Posterior vena cava (tissue), 2 donors: ENCODE measurements at regions of chr3 and their contacts with region 1.

Region 1: DNA sequence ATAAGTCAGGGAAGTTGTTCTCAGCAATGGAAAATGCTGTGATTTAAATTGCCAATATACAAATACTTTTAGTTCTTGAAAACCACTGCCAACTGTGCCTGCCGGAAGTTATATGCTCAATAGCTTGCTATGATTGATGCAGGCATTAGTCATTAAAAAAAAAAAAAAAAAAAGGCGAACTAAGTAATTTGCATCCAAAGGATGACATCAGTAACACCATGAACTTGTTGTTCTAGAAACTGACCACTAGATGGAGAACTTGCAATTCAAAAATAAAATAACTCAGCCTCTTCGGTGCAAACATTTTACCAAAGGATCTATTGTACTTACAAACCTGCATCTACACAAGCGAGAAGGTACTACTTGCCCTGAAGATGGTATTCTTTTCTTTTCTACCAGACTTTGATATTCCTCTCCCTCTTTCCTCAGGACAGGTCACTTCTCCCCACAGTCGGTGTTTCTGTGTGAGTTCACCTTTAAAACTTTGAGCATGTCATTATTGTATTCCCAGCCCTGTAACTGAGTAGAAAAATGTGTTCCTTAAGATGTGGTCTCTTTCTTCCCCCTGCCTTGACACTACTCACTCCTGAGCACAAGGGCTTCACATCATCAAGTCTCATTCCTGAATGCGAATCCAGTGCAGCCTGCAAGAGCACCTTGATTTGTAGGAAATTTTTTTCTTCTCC is 115.0 kb upstream of the VEPH1 start:
- DNase-seq: no peak

Region 2: GRCh38 chr3:157551961-157552360 is 66.3 kb before region 1 on chr3:
- intact Hi-C with region 1: no loop called
- DNase-seq: no peak

Region 3: GRCh38 chr3:157631478-157631877 is 13.3 kb after region 1 on chr3:
- intact Hi-C with region 1: loop called in 1 of 2 experiments (anchors 1 kb)
- DNase-seq: no peak

Region 4: DNA sequence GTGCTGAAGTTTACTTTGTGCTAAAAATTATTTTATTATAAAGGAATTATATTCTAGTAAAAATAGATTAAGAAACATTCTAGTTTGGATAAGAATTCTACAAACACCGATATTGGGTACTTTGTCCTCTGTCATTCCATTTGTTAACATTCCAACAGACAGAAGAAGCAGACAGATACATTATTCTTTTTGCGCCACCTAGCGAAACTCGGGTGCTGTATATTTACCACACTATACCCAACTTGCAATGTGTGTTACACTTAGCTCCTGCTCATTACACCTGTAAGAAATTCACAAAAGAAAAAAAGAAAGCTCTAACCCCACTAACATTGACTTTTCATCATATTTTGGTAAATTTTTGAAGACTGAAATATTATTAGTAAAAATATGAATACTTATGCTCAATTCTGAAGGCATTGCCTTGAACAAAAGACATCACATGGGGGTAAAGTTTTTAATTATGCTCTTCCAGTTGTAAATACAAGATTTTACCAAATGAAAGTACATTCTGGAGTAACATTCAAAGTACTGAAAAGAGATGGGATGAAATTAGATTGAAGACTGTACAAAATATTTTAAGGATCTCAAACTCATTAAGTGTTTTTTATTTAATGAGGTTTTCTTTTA is 816.3 kb after region 1 on chr3:
- intact Hi-C with region 1: loop called (anchors 10 kb)
- DNase-seq: no peak